CD8-positive, alpha-beta T cell (primary cell): ENCODE measurements at regions of chr3 and their contacts with region 1.

Region 1: DNA sequence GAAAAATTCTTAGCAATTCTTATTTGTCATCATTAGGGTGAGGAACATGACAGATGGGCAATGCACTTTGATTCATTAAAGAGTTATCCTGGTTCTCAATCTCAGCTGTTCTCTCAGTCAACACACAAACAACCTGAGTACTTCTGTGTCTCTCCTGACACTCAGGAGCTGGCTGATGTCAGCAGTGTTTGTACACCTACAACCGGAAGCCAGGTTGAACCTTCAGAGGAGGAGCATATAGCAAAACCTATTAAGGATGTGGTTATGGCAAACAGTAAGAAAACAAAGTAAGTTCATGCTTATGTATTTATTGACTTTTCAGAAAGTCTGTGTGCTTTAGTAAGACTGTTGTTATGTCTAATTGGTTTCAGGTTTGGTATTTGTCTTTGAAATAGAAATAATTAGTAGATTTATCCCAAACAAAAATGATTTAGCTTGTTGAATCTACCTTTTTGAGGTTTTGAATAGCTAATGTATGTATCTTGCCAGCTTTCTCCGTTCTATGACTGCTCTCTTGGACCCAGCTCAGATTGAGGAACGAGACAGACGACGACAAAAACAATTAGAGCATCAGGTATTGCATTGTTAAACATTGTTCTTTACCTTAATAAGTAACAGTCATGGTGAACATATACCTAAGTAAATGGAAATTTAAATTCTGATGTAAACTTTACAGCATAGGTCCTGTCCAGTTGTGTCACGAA is 36.6 kb downstream of the CCDC66 start:
- DNase-seq: peak; percentile 19 to 86 (median 62)
- ATAC-seq: peak; percentile 99
- H3K4me3 ChIP-seq: peak overlapping the region in 1 of 2 experiments; percentile 5
- H3K4me3 Mint-ChIP-seq: peak overlapping the region; percentile 73
- H3K27ac ChIP-seq: peak overlapping the region; percentile 40 to 51
- H3K27ac Mint-ChIP-seq: peak overlapping the region; percentile 92
- H3K4me1 ChIP-seq: peaks cover 60% of the 10 kb centered on the region
- H3K4me1 Mint-ChIP-seq: peaks cover 65% of the 10 kb centered on the region
- H3K27me3 ChIP-seq: no peaks in the 10 kb centered on the region
- H3K27me3 Mint-ChIP-seq: no peaks in the 10 kb centered on the region
- CTCF ChIP-seq: no peak

Region 2: DNA sequence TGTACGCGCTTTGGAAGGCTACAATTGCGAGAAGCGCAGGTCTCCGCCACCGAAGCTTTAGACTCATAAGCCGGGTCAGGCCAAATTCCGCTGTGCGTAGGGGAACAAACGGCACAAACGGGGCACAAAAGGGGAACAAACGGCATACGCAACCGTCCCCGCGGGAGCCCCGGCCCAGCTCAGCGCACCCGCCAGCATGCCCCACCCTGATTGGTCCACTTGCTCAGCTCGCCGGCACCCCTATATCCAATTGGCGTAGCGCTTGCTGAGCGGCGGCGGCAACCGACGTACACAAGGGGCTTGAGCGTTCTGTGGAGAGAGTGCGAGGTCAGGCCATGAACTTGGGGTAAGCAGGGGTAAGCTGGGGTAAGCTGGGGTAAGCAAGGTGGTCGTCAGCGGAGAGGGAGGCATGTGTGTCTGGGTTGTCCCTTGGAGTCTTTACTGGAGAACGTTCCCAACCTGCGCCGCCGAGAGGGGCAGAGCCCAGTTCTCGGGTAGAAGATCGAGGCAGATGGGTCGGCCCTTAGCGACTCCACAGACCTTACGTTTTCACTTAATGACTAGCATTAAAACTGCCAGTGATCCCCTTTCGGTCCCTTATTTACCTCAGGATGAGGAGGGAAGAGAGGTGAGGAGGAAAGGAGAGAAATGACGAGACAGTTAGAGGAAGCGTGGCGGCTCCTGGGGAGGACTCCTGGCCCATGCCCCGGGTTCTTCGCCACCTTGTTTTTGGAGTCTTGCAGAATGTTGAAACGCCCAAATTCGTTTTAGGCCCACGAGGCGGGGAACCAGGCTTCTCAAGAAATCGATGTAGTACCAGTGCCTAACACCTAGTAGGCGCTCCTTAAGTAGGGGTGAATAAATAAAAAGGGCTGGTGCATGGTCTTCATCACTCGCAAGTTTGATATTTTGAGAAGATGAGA is 36.4 kb before region 1 on chr3 and contains the start of gene CCDC66:
- CTCF ChIA-PET with region 1: no interaction called
- POLR2A ChIA-PET with region 1: interaction called, 39 read pairs
- intact Hi-C with region 1: loop called (anchors 1 kb)
- DNase-seq: peak; percentile 88 to 96 (median 94)
- ATAC-seq: peak; percentile 89
- H3K4me3 ChIP-seq: peak within 1 kb of the TSS; percentile 70 to 78
- H3K4me3 Mint-ChIP-seq: peak within 1 kb of the TSS; percentile 100
- H3K27ac ChIP-seq: peak within 1 kb of the TSS; percentile 91 to 93
- H3K27ac Mint-ChIP-seq: peak within 1 kb of the TSS; percentile 100
- H3K4me1 ChIP-seq: peaks cover 22% of the 10 kb centered on the region
- H3K4me1 Mint-ChIP-seq: peaks cover 32% of the 10 kb centered on the region
- H3K27me3 ChIP-seq: no peaks in the 10 kb centered on the region
- H3K27me3 Mint-ChIP-seq: no peaks in the 10 kb centered on the region
- CTCF ChIP-seq: peak; percentile 83
- total RNA-seq, gene CCDC66: 63.9 to 65.4 TPM

Region 3: GRCh38 chr3:57192028-57192427 is 598.4 kb after region 1 on chr3:
- CTCF ChIA-PET with region 1: no interaction called
- POLR2A ChIA-PET with region 1: no interaction called
- intact Hi-C with region 1: no loop called
- DNase-seq: no peak
- ATAC-seq: no peak
- H3K4me3 ChIP-seq: no peak overlapping the region
- H3K4me3 Mint-ChIP-seq: no peak overlapping the region
- H3K27ac ChIP-seq: no peak overlapping the region
- H3K27ac Mint-ChIP-seq: no peak overlapping the region
- H3K4me1 ChIP-seq: no peaks in the 10 kb centered on the region
- H3K4me1 Mint-ChIP-seq: peaks cover 2% of the 10 kb centered on the region
- H3K27me3 ChIP-seq: no peaks in the 10 kb centered on the region
- H3K27me3 Mint-ChIP-seq: peaks cover 17% of the 10 kb centered on the region
- CTCF ChIP-seq: no peak